Lower lobe of right lung (tissue), 2 donors: ENCODE measurements at regions of chr7 and their contacts with region 1.

Region 1: GRCh38 chr7:155344600-155345433 is 47.1 kb downstream of the INSIG1 start:
- DNase-seq: peak; percentile 85
- ATAC-seq: peak; percentile 96 to 98
- H3K4me3 ChIP-seq: peak overlapping the region; percentile 48
- H3K27ac ChIP-seq: no peak overlapping the region
- H3K4me1 ChIP-seq: no peaks in the 10 kb centered on the region
- H3K27me3 ChIP-seq: peaks cover 10% of the 10 kb centered on the region
- CTCF ChIP-seq: peak; percentile 88

Region 2: DNA sequence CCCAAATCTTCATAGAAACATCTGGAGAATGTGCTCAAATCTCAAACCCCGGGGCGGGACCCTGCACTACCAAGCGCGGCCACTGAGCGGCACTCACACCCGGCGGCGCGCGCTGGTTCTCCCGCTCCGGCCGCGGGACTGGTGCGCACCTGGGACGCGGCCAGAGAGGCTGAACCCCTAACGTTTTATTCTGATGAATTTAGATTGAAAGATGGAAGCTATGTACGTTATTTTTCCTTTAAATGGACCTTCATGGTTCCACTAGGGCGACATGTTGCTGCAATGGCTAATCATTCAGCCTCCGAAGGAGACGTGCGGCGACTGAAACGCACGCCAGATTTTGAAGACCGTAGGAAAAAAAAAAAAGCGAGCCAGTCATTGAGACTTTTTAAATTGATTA is 154.1 kb before region 1 on chr7:
- intact Hi-C with region 1: loop called (anchors 10 kb)
- DNase-seq: peak; percentile 72
- ATAC-seq: peak; percentile 83
- H3K4me3 ChIP-seq: no peak overlapping the region
- H3K27ac ChIP-seq: no peak overlapping the region
- H3K4me1 ChIP-seq: no peaks in the 10 kb centered on the region
- H3K27me3 ChIP-seq: peaks cover 8% of the 10 kb centered on the region
- CTCF ChIP-seq: peak; percentile 83